ENCODE measurements at regions of chr7 and their contacts with region 1.

Region 1: GRCh38 chr7:148142660-148143248 is 447.8 kb upstream of the C7orf33 start:
- DNase-seq: no peak
- CTCF ChIP-seq: peak; percentile 55

Region 2: GRCh38 chr7:147923841-147924240 is 218.9 kb before region 1 on chr7:
- CTCF ChIA-PET with region 1: no interaction called
- POLR2A ChIA-PET with region 1: no interaction called
- DNase-seq: no peak
- CTCF ChIP-seq: no peak

Region 3: DNA sequence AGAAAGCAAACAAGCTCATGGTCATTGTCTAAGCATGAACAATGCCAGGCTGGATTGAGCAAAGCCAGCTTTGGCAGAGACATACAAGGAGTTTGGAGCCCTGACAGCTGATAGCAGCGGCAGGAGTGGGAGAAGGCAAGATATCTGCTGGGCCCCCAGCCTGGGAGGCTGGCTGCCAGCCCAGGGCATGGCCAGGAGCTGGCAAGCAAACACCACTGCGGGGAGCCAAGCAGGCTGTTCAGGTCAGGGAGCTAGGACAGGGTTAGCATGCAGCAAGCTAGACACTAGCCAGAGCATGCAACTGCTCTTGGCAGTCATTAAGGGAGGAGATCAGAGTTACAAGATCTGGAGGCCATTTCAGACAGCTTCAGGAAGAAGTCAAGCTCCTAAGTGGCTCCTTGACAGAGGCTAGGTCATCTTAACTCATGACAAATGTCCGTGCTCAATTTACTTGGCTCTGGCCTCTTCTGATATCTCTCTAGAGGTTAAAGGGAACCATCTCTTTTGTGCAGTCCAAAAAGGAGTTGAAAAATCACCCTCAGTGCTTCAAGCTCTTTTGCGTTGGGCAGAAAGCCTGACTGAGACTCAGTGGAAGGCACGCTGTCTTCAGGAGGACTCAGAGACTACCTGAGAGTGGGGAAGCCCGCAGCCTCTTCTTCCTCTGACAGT is 11.0 kb after region 1 on chr7:
- CTCF ChIA-PET with region 1: interaction called, 11 read pairs
- POLR2A ChIA-PET with region 1: no interaction called
- DNase-seq: no peak
- CTCF ChIP-seq: no peak